AG04449 (cell line): ENCODE measurements at regions of chr11 and their contacts with region 1.

Region 1: DNA sequence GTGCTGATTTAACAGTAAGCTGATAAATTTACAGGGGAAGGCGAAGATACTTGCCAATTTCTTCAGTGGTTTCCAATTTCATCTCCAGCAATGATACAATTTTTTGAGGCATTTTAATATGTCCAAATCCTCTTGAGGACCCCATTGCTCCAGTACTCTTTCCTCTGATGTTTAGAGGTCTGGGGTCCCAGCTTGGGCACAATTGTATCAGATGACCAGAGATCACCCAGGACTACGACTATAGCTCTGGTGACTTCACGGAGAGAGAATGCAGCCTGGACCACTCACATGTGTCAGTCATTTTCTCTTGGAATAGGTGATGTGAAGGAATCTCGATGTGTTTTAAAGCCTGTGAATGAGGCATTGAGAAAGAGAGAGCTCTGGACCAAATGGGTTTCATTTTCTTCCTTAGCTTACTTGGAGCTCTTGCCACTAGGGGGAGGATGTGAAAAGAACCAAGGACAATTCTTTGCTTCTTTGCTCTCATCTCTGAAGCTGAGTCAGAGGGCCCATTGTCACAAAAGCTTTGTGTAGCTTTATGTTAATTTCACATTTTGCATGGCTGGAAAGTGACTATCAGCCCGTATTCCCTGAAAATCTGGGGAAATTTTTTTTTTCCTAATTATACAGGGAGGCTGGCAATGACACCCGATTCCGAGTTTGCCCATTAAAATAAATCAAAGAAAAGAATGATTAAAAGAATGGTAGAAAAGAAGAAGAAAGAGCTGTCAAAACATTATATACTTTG is 6.7 kb upstream of the CCDC90B start:
- DNase-seq: no peak
- H3K4me3 ChIP-seq: 0 out of 2 replicates have a peak overlapping the region, but pooled peaks have one; percentile 16
- CTCF ChIP-seq: peak; percentile 75

Region 2: DNA sequence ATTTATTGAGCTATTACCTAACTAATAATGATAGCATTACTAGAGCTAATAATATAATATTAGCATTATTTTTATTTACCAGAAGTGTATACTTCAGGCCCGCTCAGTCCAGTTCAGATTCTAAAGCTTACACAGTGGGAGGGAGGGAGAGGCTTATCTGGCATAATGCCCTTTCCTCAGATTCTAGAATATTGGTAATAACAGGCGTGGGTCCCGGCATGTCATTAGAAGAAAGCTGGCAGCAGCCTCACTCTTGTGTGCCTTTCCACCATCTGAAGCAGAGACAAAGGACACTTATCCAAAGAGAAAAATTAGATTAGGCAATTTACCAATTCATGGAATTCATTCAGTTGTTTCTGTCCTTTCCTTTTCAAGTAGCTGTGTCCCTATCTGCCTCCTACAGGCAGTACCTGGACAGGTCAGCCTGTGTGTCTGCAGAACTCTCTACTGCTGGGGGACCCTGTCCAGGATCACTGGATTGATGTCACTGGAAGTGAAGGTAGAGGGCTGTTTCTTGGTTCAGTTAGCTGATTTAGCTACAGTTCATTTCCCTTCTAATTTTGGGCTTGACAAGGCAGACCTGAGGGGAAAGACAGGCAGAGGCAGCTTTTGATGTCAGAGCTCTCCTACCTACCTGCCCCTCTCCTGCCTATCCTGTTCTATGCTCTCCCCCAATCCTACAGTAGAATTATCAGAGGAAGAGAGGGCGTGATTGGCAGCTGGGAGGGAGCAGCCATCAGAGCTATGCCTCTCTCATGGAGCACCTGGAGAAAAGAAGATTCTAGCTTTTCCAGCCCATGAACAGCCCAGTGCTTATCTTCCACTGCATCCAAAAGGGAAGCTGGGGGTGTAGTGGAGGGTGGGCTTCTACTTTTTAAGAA is 13.6 kb after region 1 on chr11:
- CTCF ChIA-PET with region 1: interaction called, 78 read pairs
- POLR2A ChIA-PET with region 1: no interaction called
- DNase-seq: no peak
- H3K4me3 ChIP-seq: no peak overlapping the region
- CTCF ChIP-seq: no peak

Region 3: DNA sequence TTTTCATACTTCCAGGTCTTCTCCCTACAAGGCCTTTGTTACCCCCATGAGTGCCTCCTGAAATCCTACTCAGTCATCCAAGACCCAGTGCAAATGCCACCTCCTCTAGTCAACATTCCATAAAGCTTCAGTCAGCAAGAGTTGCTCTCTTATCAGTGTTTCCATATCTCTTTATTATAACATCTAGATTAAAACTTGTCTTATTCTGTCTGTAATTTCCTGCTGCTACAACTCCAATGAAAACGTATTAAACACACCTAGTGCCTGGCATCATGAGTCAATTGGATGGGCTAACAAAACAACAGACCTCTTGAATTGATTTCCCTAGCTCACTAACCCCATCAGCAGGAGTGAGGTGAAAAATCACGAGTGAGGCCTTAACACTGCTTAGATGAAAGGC is 364.0 kb after region 1 on chr11:
- CTCF ChIA-PET with region 1: no interaction called
- POLR2A ChIA-PET with region 1: no interaction called
- DNase-seq: no peak
- H3K4me3 ChIP-seq: no peak overlapping the region
- CTCF ChIP-seq: no peak

Region 4: GRCh38 chr11:83724008-83724461 is 431.2 kb after region 1 on chr11:
- CTCF ChIA-PET with region 1: interaction called, 95 read pairs
- POLR2A ChIA-PET with region 1: no interaction called
- DNase-seq: peak; percentile 9
- H3K4me3 ChIP-seq: peak overlapping the region; percentile 0
- CTCF ChIP-seq: peak; percentile 31